ENCODE measurements at regions of chr19 and their contacts with region 1.

Region 1: GRCh38 chr19:41144403-41144802 is 30.2 kb downstream of the CYP2F1 start:
- DNase-seq: peak; percentile 15
- H3K4me3 ChIP-seq: no peak overlapping the region
- H3K27ac ChIP-seq: no peak overlapping the region
- H3K4me1 ChIP-seq: peaks cover 0 to 9% (median 0%) of the 10 kb centered on the region in 3 donors
- H3K27me3 ChIP-seq: peaks cover 0 to 15% (median 0%) of the 10 kb centered on the region in 4 donors
- CTCF ChIP-seq: peak; percentile 78 to 91 (median 86)
- POLR2A ChIP-seq: no peak

Region 2: DNA sequence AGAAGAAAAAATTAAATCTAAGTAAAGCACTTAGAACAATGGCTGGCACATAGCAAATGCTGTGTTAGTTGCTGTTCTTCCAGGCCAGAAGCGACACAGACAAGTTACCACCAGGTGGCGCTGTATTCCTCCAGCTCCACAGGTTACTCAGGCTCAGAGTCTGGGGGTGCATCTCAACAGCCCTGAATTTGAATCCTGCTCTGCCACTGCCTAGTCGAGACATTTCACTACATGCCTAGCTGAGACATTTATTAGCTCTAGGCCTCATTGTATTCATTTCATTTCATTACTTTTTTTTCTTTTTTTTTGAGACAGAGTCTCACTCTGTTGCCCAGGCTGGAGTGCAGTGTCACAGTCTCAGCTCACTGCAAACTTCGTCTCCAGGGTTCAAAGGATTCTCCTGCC is 169.8 kb before region 1 on chr19:
- intact Hi-C with region 1: loop called (anchors 5 kb)
- DNase-seq: no peak
- H3K4me3 ChIP-seq: no peak overlapping the region
- H3K27ac ChIP-seq: no peak overlapping the region
- H3K4me1 ChIP-seq: no peaks in the 10 kb centered on the region
- H3K27me3 ChIP-seq: peaks cover 0 to 46% (median 0%) of the 10 kb centered on the region in 4 donors
- CTCF ChIP-seq: peak; percentile 76 to 90 (median 84)
- POLR2A ChIP-seq: no peak

Region 3: GRCh38 chr19:41009700-41010235 is 134.6 kb before region 1 on chr19:
- intact Hi-C with region 1: no loop called
- DNase-seq: no peak
- H3K4me3 ChIP-seq: no peak overlapping the region
- H3K27ac ChIP-seq: no peak overlapping the region
- H3K4me1 ChIP-seq: no peaks in the 10 kb centered on the region
- H3K27me3 ChIP-seq: peaks cover 0 to 60% (median 0%) of the 10 kb centered on the region in 4 donors
- CTCF ChIP-seq: no peak
- POLR2A ChIP-seq: no peak